ENCODE measurements at regions of chr2 and their contacts with region 1.

Region 1: GRCh38 chr2:69616756-69617155 is 26.8 kb downstream of the AAK1 start:
- DNase-seq: peak; percentile 73
- H3K4me3 Mint-ChIP-seq: peak overlapping the region; percentile 11
- H3K27ac Mint-ChIP-seq: peak overlapping the region; percentile 57
- H3K4me1 Mint-ChIP-seq: peaks cover 37% of the 10 kb centered on the region
- H3K27me3 Mint-ChIP-seq: no peaks in the 10 kb centered on the region

Region 2: GRCh38 chr2:69589973-69590652 is 26.6 kb before region 1 on chr2:
- CTCF ChIA-PET with region 1: no interaction called
- intact Hi-C with region 1: loop called (anchors 1 kb)
- DNase-seq: no peak
- H3K4me3 Mint-ChIP-seq: peak overlapping the region; percentile 1
- H3K27ac Mint-ChIP-seq: peak overlapping the region; percentile 68
- H3K4me1 Mint-ChIP-seq: peaks cover 79% of the 10 kb centered on the region
- H3K27me3 Mint-ChIP-seq: no peaks in the 10 kb centered on the region

Region 3: GRCh38 chr2:69634196-69634821 is 17.6 kb after region 1 on chr2:
- CTCF ChIA-PET with region 1: interaction called, 4 read pairs
- intact Hi-C with region 1: loop called (anchors 1 kb)
- DNase-seq: no peak
- H3K4me3 Mint-ChIP-seq: no peak overlapping the region
- H3K27ac Mint-ChIP-seq: peak overlapping the region; percentile 59
- H3K4me1 Mint-ChIP-seq: peaks cover 68% of the 10 kb centered on the region
- H3K27me3 Mint-ChIP-seq: no peaks in the 10 kb centered on the region

Measured in activated naive CD4-positive, alpha-beta T cell treated with anti-CD3 and anti-CD28 coated beads for 36 hours (primary cell).